Right cardiac atrium (tissue), 5 donors: ENCODE measurements at regions of chr16 and their contacts with region 1.

Region 1: GRCh38 chr16:12067714-12068401 is 91.3 kb downstream of the SNX29 start:
- DNase-seq: peak in 1 of 3 donors; percentile 81
- ATAC-seq: peak; percentile 59 to 66
- H3K4me3 ChIP-seq: no peak overlapping the region
- H3K27ac ChIP-seq: no peak overlapping the region
- H3K4me1 ChIP-seq: no peaks in the 10 kb centered on the region
- H3K27me3 ChIP-seq: no peaks in the 10 kb centered on the region

Region 2: DNA sequence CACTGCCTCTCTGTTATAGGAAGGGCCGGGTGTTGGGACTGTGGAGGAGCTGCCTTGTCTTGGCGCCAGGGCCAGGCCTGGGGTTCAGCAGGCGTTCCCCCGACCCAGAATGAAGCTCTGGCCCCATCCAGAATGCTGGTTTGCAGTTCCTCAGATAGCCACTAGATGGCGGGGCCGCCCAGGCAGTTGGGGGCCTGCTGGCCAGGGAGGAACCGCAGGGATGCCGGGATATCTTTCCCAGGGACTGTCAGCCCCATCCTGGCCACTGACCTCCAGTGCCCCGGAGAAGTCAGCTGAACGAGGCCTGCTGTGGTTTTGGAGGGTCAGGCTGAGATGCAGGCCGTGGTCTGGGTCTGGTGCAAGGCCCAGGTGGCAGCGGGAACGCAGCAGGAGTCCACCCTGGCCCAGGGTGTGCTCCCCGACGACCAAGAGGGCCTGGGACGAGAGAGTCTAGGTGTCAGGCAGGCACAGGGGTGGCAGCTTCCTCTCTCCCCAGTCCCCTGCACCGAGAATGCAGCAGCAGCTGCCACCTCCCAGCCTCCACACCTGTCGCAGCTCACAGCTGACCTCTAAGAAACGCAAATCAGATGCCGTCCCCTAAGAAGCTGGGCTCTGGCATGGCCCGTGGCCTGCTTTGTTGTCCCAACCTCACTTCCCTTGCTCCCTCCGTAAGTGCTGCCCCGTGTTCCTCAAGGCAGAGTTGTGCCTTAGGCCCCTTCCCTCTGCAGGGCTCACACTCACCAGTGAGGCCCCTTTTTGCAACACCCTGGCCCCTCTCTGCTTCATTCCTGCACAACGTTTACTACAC is 671.4 kb before region 1 on chr16:
- intact Hi-C with region 1: loop called in 2 of 4 experiments (anchors 10 kb)
- DNase-seq: peak; percentile 71 to 89 (median 89)
- ATAC-seq: peak; percentile 77 to 81
- H3K4me3 ChIP-seq: no peak overlapping the region
- H3K27ac ChIP-seq: no peak overlapping the region
- H3K4me1 ChIP-seq: no peaks in the 10 kb centered on the region
- H3K27me3 ChIP-seq: no peaks in the 10 kb centered on the region

Region 3: GRCh38 chr16:11407047-11407982 is 660.5 kb before region 1 on chr16:
- intact Hi-C with region 1: loop called in 1 of 4 experiments (anchors 10 kb)
- DNase-seq: peak in 1 of 3 donors; percentile 69
- ATAC-seq: peak in 1 of 2 donors; percentile 49
- H3K4me3 ChIP-seq: no peak overlapping the region
- H3K27ac ChIP-seq: no peak overlapping the region
- H3K4me1 ChIP-seq: no peaks in the 10 kb centered on the region
- H3K27me3 ChIP-seq: no peaks in the 10 kb centered on the region

Region 4: DNA sequence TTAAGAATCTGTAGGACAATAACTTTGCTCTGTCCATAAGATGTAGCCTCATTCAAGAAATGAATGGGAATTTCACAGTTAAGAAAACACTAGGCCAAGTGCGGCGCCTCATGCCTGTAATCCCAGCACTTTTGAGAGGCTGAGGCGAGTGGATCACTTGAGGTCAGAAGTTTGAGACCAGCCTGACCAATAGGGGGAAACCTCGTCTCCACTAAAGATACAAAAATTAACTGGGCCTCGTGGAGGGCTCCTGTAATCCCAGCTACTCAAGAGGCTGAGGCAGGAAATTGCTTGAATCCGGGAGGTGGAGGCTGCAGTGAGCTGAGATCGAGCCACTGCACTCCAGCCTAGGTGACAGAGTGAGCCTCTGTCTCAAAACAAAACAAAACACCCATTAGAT is 196.7 kb before region 1 on chr16:
- intact Hi-C with region 1: loop called in 1 of 4 experiments (anchors 10 kb)
- DNase-seq: no peak
- ATAC-seq: peak; percentile 39 to 45
- H3K4me3 ChIP-seq: no peak overlapping the region
- H3K27ac ChIP-seq: no peak overlapping the region
- H3K4me1 ChIP-seq: no peaks in the 10 kb centered on the region
- H3K27me3 ChIP-seq: no peaks in the 10 kb centered on the region

Region 5: DNA sequence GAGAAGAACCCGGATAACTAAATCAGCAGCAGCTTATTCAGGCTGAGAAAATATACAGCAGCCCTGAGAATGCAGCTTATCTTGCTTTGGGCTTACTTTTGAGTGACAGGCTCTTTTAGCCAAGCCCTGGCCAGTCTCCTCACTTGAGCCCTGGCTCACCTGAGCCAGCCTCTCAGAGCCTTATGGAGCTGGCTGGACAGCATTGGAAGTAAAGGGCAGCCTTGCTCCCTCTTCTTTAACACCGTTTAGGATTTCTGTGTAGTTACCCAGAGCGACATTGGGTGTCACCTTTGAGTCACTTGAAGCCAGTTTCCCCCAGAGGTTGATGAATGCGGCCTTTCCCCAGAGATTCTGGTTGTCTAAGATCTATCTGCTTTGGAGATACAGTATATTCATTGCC is 118.3 kb before region 1 on chr16:
- intact Hi-C with region 1: loop called (anchors 2 to 5 kb)
- DNase-seq: no peak
- ATAC-seq: peak; percentile 56 to 64
- H3K4me3 ChIP-seq: no peak overlapping the region
- H3K27ac ChIP-seq: no peak overlapping the region
- H3K4me1 ChIP-seq: no peaks in the 10 kb centered on the region
- H3K27me3 ChIP-seq: no peaks in the 10 kb centered on the region

Region 6: DNA sequence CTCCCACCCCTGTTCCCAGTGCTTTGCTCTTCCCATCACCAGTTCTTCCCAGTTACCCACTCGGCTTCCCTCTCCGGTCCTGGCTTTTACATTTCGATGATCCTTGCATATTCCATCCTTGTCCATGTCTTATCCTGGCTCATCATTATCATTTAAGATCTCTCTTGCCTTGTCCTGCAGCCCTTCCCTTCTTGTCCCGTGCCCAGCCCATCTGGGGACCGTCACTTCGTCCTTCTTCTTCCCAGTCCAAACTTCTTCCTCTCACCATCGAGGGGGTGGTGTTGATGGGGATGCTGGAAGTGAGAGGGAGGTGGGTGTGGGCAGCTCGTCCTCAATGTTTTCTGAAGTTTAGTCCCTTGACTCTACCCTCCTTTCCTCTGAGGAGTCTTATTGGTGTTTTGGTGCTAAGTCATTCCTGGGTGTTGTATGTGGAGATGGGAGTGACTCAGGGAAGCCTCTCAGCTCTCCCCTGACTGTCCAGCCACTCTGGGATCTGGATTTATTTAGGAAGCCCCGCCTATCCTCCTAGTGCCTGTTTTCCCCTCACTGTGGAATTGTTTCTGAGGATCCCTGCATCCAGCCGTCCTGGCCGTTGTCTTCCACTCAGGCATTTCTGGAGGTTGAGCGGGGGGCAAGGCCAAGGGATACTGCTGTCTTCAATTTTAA is 90.3 kb before region 1 on chr16:
- intact Hi-C with region 1: loop called in 2 of 4 experiments (anchors 10 kb)
- DNase-seq: peak in 1 of 3 donors; percentile 64
- ATAC-seq: peak; percentile 41 to 77
- H3K4me3 ChIP-seq: peak overlapping the region; percentile 98
- H3K27ac ChIP-seq: no peak overlapping the region
- H3K4me1 ChIP-seq: no peaks in the 10 kb centered on the region
- H3K27me3 ChIP-seq: no peaks in the 10 kb centered on the region

Region 7: DNA sequence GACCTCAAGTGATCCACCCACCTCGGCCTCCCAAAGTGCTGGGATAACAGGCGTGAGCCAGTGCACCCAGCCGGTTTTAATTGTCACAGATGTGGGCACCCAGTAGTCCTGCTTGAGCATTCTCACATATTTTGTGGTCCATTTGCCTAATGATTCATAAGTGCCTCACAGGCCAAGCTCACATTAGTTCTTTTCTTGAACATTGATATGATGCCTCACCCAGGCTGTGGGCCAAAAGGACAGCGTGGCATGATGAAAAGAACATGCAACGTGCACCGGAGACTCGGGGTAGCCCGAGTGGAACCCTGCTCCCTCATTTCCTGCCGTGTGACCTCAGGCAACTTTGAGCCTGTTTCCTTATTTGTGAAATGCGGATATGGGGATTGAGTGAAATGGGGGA is 90.6 kb after region 1 on chr16:
- intact Hi-C with region 1: no loop called
- DNase-seq: no peak
- ATAC-seq: no peak
- H3K4me3 ChIP-seq: no peak overlapping the region
- H3K27ac ChIP-seq: no peak overlapping the region
- H3K4me1 ChIP-seq: peaks cover 12% of the 10 kb centered on the region
- H3K27me3 ChIP-seq: no peaks in the 10 kb centered on the region